Cardiac septum (tissue), 1 donor: ENCODE measurements at regions of chr6 and their contacts with region 1.

Region 1: GRCh38 chr6:169851641-169852503 is 100.5 kb downstream of the ERMARD start:
- DNase-seq: peak; percentile 69

Region 2: DNA sequence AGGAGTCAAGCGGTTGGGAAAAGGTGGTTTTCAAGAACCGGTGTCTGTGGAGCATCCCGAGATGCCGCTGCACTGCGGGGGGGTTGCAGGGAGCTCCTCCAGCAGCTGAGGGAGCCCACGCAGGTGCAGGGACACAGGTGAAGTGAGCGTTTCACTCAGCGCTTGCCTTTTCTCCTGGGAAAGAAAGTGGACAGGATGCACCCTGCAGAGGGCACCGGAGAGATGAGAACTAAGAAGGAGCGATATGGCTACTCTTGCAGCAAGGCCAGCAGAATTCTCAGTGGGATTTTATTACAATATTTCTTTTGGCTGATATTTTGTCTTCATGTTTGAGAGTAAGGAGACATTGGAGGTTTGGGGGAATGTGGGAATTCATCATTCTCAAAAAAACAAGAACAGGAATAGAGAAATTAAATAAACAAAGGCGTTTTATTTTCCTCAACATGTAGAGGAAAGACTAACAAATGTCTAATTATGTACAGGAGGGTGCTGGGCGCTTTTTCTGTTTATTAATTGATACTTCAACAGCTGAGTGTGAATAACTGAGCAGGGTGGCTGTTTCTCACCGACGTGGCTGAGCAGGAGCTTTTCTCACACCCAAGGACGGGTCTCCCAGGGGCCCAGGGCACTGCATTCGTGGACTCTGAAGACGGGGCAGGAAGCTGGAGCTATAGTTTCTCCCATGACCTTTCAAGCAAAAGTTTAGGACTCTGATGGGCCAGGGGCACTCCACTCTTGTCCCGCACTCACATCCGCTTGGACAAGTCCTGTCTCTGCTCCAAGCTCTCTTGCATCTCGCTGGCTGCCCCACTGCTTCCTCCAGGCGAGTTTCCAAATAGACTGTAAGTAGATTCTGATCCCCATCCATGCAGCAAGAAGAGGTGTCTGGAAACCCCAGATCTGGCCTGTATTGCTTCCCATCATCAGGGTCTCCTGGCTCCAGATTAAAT is 1234.8 kb before region 1 on chr6:
- intact Hi-C with region 1: no loop called
- DNase-seq: no peak

Region 3: DNA sequence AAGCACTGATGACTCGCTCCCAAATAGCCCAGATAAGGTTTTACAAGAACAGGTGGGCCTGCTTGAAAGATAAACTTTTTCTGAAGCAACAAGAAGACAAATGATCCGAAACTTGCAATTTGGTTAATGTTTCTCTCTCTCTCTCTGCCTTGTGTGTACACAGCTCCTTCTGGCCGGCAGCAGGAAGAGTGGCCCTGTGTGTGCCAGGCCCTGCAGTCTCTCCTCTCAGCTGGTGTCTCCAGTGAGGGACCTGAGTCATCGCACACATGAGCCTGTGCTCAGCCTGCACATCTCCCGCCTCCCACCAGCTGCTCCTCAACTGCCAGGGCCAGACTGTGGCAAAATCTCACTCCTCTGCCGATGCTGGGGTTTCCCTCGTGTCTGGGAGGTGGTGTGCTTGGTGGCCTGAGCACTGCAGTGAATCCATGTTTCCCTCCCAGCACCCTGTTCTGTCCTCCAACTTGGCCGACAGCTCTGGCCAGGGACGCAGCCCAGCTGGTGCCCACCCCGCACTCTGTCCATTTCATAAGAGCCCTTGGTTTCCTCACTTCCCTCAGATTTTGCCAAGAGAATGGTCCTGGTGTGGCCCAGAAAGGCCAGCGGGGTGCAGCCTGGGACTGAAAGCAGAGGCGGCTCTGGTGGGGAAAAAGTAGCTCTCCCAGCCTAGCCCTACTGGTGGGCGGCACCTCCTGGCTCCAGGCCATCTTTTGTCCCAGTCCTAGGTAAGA is 51.0 kb before region 1 on chr6:
- intact Hi-C with region 1: no loop called
- DNase-seq: peak; percentile 63

Region 4: GRCh38 chr6:169905041-169905807 is 53.4 kb after region 1 on chr6:
- intact Hi-C with region 1: loop called (anchors 5 kb)
- DNase-seq: no peak